ENCODE measurements at regions of chr6 and their contacts with region 1.

Region 1: GRCh38 chr6:32796848-32797776 is 19.7 kb downstream of the HLA-DOB start:
- DNase-seq: peak; percentile 46
- ATAC-seq: peak; percentile 91
- H3K4me3 ChIP-seq: peak overlapping the region; percentile 21 to 25
- H3K27ac ChIP-seq: no peak overlapping the region
- H3K4me1 ChIP-seq: peaks cover 3% of the 10 kb centered on the region
- H3K27me3 ChIP-seq: peaks cover 37% of the 10 kb centered on the region
- CTCF ChIP-seq: peak; percentile 88

Region 2: DNA sequence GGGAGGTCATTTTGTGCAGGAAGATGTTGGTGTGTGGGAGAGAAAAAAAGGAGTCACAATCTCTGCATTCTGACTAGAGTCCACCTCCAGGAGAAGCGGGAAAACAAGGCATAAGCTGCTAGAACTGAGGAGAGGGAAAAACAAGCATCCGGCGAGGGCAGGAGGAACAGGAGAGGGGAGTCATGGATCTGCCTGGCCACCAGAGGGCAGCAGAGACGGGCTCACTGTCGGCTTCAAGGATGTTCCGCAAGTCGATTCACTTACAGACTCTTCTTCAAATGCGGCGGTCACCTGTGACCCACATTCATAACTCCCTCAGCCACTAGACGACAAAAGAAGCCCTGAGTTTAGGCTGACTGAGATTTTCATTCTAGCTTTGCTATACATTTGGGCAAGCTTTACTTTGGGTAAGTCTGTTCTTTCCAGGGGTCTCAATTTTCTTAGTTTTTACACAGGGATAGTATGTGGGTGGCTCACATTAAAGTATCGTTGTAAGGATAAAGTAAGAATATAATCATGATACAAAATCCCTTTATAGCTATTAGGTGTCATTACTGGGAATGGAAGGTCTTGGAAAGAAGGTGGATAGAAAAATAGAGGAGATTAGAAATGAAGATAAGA is 383.6 kb before region 1 on chr6:
- CTCF ChIA-PET with region 1: no interaction called
- POLR2A ChIA-PET with region 1: no interaction called
- in situ Hi-C with region 1: no loop called
- intact Hi-C with region 1: loop called (anchors 5 kb)
- DNase-seq: peak; percentile 69
- ATAC-seq: peak; percentile 82
- H3K4me3 ChIP-seq: no peak overlapping the region
- H3K27ac ChIP-seq: no peak overlapping the region
- H3K4me1 ChIP-seq: peaks cover 3% of the 10 kb centered on the region; the same call in 1 of the 2 replicates
- H3K27me3 ChIP-seq: peaks cover 35% of the 10 kb centered on the region
- CTCF ChIP-seq: peak; percentile 96

Region 3: DNA sequence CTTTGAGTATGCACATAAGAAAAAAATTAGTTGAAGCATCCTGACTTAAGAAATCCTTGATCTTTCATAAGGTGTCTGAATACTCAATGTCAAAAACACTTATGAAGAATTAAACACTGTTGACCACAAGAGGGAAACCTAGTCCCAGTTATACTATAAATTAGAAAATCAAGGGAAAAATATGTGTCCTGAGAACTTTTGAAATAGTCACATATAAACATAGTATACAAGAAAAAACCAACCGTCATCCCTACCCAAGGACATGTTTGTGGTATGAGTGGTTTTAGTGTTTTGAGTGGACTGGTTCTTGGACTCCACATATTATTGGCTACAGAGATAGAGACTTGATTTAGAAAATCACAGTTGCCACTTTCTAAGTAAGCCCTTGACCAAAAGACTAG is 365.1 kb before region 1 on chr6:
- CTCF ChIA-PET with region 1: no interaction called
- POLR2A ChIA-PET with region 1: no interaction called
- in situ Hi-C with region 1: no loop called
- intact Hi-C with region 1: loop called (anchors 5 kb)
- DNase-seq: no peak
- ATAC-seq: no peak
- H3K4me3 ChIP-seq: no peak overlapping the region
- H3K27ac ChIP-seq: no peak overlapping the region
- H3K4me1 ChIP-seq: no peaks in the 10 kb centered on the region
- H3K27me3 ChIP-seq: peaks cover 28% of the 10 kb centered on the region
- CTCF ChIP-seq: peak; percentile 15; the same call in 1 of the 2 replicates

Region 4: GRCh38 chr6:32779036-32779435 is 18.1 kb before region 1 on chr6:
- CTCF ChIA-PET with region 1: no interaction called
- POLR2A ChIA-PET with region 1: no interaction called
- in situ Hi-C with region 1: no loop called
- intact Hi-C with region 1: no loop called
- DNase-seq: no peak
- ATAC-seq: no peak
- H3K4me3 ChIP-seq: no peak overlapping the region
- H3K27ac ChIP-seq: no peak overlapping the region
- H3K4me1 ChIP-seq: no peaks in the 10 kb centered on the region
- H3K27me3 ChIP-seq: peaks cover 18% of the 10 kb centered on the region
- CTCF ChIP-seq: no peak